CD4-positive, alpha-beta memory T cell (primary cell): ENCODE measurements at regions of chr17 and their contacts with region 1.

Region 1: GRCh38 chr17:79065105-79065670 is 9.4 kb upstream of the ENGASE start:
- DNase-seq: peak; percentile 59 to 68 (median 63)
- H3K4me3 ChIP-seq: no peak overlapping the region
- H3K4me3 Mint-ChIP-seq: peak overlapping the region in 6 of 8 donors; percentile 15 to 73 (median 64)
- H3K27ac ChIP-seq: no peak overlapping the region
- H3K27ac Mint-ChIP-seq: peak overlapping the region in 3 of 7 donors; percentile 49 to 53 (median 51)
- H3K4me1 ChIP-seq: peaks cover 5% of the 10 kb centered on the region
- H3K4me1 Mint-ChIP-seq: peaks cover 2 to 5% (median 3%) of the 10 kb centered on the region in 4 donors
- H3K27me3 ChIP-seq: no peaks in the 10 kb centered on the region
- H3K27me3 Mint-ChIP-seq: peaks cover 1% of the 10 kb centered on the region in 2 donors

Region 2: DNA sequence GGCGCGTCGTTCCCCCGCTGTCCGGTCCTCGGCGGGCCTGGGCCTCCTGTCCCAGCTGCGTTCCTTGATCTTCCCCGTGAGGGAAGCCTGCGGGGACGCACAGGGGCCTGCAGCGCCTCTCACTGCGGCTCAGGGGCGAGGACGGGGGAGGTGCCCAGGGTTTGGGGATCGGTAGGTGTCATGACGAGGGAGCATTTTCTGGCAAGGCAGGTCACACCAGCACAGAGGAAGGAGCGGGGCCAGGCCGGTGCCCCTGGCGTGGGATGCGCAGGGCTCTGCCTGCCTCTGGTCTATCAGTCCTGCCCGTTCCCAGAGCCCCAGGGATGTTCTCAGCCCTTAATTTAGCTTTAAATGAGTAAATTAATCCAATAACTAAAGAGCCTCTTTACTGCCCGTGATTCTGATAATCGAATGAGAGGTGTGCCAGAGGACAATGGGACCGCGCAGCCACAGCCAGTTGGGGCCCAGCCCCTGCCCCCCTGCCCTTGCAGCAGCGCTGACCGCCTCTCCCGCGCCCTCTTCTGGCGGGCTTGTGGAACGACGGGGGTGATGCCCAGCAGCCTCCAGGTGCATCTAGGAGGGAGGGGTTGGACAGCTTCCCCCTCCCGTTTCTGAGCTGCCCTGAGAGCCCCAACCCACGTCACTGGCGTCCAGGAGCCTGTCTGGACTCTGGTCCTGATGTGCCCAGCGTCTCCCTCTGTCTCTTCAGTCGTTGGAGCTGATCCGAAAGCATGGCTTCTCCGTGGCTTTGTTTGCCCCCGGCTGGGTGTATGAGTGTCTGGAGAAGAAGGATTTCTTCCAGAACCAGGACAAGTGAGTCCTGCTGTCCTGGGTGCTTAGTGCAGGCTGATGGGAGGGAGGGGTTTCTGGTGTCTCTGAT is 17.4 kb after region 1 on chr17:
- CTCF ChIA-PET with region 1: interaction called, 16 read pairs
- POLR2A ChIA-PET with region 1: no interaction called
- intact Hi-C with region 1: loop called (anchors 1 kb)
- DNase-seq: peak in 4 of 5 donors; percentile 30 to 55 (median 41)
- H3K4me3 ChIP-seq: no peak overlapping the region
- H3K4me3 Mint-ChIP-seq: no peak overlapping the region
- H3K27ac ChIP-seq: no peak overlapping the region
- H3K27ac Mint-ChIP-seq: no peak overlapping the region
- H3K4me1 ChIP-seq: no peaks in the 10 kb centered on the region
- H3K4me1 Mint-ChIP-seq: peaks cover 0 to 10% (median 2%) of the 10 kb centered on the region in 4 donors
- H3K27me3 ChIP-seq: no peaks in the 10 kb centered on the region
- H3K27me3 Mint-ChIP-seq: no peaks in the 10 kb centered on the region

Region 3: GRCh38 chr17:79087428-79088143 is 22.4 kb after region 1 on chr17:
- CTCF ChIA-PET with region 1: interaction called, 16 read pairs
- POLR2A ChIA-PET with region 1: no interaction called
- intact Hi-C with region 1: loop called (anchors 1 kb)
- DNase-seq: peak in 4 of 5 donors; percentile 61 to 70 (median 65)
- H3K4me3 ChIP-seq: no peak overlapping the region
- H3K4me3 Mint-ChIP-seq: no peak overlapping the region
- H3K27ac ChIP-seq: no peak overlapping the region
- H3K27ac Mint-ChIP-seq: no peak overlapping the region
- H3K4me1 ChIP-seq: no peaks in the 10 kb centered on the region
- H3K4me1 Mint-ChIP-seq: peaks cover 0 to 3% (median under 1%) of the 10 kb centered on the region in 4 donors
- H3K27me3 ChIP-seq: no peaks in the 10 kb centered on the region
- H3K27me3 Mint-ChIP-seq: peaks cover 4 to 5% of the 10 kb centered on the region in 2 donors

Region 4: DNA sequence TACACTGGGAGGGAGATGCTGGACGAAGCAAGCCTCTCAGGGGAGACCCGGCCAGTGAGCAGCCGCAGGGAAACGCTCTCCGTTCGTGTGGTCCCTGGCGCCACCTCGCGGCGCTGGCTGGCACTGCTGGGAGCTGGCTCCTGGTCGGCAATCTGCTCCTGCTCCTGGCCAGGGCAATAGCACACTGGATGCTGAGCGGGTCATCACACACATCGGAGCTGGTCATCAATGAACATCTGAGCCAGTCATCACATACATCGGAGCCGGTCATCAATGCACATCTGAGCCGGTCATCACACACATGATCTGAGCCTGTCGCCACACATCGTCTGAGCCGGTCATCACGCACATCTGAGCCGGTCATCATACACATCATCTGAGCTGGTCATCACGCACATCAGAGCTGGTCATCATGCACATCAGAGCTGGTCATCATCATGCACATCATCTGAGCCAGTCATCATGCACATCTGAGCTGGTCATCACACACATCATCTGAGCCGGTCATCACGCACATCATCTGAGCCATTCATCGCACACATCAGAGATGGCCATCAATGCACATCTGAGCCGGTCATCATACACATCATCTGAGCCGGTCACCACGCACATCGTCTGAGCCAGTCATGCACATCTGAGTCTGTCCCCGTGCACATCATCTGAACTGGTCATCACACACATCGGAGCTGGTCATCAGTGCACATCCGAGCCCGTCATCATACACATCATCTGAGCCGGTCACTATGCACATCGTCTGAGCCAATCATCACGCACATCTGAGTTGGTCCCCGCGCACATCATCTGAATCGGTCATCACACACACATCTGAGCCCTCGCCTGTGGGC is 328.4 kb after region 1 on chr17:
- CTCF ChIA-PET with region 1: interaction called, 12 read pairs
- POLR2A ChIA-PET with region 1: no interaction called
- intact Hi-C with region 1: no loop called
- DNase-seq: peak in 4 of 5 donors; percentile 43 to 59 (median 55)
- H3K4me3 ChIP-seq: no peak overlapping the region
- H3K4me3 Mint-ChIP-seq: no peak overlapping the region
- H3K27ac ChIP-seq: no peak overlapping the region
- H3K27ac Mint-ChIP-seq: no peak overlapping the region
- H3K4me1 ChIP-seq: no peaks in the 10 kb centered on the region
- H3K4me1 Mint-ChIP-seq: peaks cover 0 to 10% (median 6%) of the 10 kb centered on the region in 4 donors
- H3K27me3 ChIP-seq: no peaks in the 10 kb centered on the region
- H3K27me3 Mint-ChIP-seq: peaks cover 30 to 39% of the 10 kb centered on the region in 2 donors